Left ventricle myocardium inferior (tissue), 1 donor: ENCODE measurements at regions of chr10 and their contacts with region 1.

Region 1: GRCh38 chr10:11515596-11516430 is 95.6 kb downstream of the USP6NL start:
- DNase-seq: no peak
- H3K4me3 ChIP-seq: no peak overlapping the region
- H3K27ac ChIP-seq: no peak overlapping the region
- H3K4me1 ChIP-seq: peaks cover 7% of the 10 kb centered on the region
- H3K27me3 ChIP-seq: no peaks in the 10 kb centered on the region
- CTCF ChIP-seq: peak; percentile 90

Region 2: DNA sequence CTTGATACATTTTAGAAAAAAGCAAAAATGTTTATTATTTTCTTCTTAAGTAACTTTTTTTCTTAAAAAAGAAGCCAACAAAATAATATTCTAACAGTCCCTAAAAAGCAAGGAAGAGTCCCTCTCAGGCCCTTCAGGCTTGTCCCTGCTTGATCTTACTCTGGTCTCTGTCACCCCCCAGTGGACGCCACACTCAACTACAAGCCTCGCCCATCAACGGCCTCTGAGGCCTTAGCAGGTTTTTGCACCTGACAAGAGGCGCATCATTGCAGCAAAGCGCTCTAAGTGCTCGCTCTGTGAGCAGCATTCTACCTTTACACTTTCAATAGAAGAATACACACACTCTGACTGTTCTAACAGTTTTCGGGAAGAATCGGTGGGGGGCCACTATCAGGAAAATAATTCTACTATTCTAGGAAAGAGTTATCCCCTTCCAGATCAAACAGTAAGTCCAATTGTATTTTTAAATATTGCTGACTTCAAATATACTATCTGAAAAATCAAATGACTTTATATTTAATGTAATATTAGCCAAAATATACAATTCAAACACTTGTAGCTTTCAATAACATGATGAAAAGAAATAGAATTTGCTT is 43.6 kb before region 1 on chr10:
- intact Hi-C with region 1: no loop called
- DNase-seq: peak; percentile 48
- H3K4me3 ChIP-seq: no peak overlapping the region
- H3K27ac ChIP-seq: no peak overlapping the region
- H3K4me1 ChIP-seq: peaks cover 8% of the 10 kb centered on the region
- H3K27me3 ChIP-seq: no peaks in the 10 kb centered on the region
- CTCF ChIP-seq: peak; percentile 91

Region 3: GRCh38 chr10:11578802-11579255 is 63.0 kb after region 1 on chr10:
- intact Hi-C with region 1: no loop called
- DNase-seq: no peak
- H3K4me3 ChIP-seq: no peak overlapping the region
- H3K27ac ChIP-seq: no peak overlapping the region
- H3K4me1 ChIP-seq: peaks cover 8% of the 10 kb centered on the region
- H3K27me3 ChIP-seq: no peaks in the 10 kb centered on the region
- CTCF ChIP-seq: no peak

Region 4: DNA sequence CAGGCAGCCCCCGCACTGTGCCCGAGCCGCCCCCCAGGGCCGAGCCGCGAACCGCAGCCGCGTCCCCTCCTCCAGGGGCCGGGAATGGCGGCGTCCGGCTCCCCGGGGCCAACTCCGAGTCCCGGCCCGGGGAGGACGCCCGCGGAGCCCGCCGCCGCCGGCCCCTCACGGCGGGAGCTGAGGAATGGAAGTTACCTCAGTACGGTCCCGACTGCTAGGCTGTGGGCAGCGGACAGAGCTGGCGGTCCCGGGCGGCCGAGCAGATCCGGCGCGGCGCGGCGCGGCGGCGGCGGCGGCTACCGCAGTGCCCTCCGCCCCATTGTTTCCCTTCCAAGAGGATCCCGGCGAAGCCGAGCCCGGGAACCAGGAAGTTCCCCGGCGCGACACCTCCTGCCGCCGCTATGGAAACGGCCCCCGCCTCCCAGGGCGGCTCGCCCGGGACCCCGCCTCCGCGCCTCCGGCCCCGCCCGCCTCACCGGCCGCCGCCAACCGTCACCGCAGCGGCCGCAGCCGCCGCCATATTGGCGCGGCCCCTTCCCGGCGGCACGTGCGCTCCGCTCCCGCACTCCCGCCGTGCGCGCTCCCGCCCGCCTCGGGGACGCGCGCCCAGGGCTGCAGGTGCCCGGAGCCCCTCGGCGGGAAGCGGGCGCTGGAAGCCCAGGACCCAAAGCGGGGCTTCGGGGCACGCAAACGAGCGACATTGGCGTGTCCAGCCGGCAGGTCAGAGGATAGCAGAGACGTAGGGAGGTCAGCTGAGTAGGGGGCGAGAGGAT is 95.6 kb after region 1 on chr10 and contains the start of gene USP6NL:
- intact Hi-C with region 1: no loop called
- DNase-seq: peak; percentile 91
- H3K4me3 ChIP-seq: peak within 1 kb of the TSS; percentile 83
- H3K27ac ChIP-seq: peak within 1 kb of the TSS; percentile 91
- H3K4me1 ChIP-seq: peaks cover 34% of the 10 kb centered on the region
- H3K27me3 ChIP-seq: no peaks in the 10 kb centered on the region
- CTCF ChIP-seq: no peak
- total RNA-seq, gene USP6NL: 7.9 TPM

Region 5: GRCh38 chr10:11724938-11725776 is 209.3 kb after region 1 on chr10:
- intact Hi-C with region 1: loop called (anchors 10 kb)
- DNase-seq: no peak
- H3K4me3 ChIP-seq: no peak overlapping the region
- H3K27ac ChIP-seq: no peak overlapping the region
- H3K4me1 ChIP-seq: no peaks in the 10 kb centered on the region
- H3K27me3 ChIP-seq: peaks cover 3% of the 10 kb centered on the region
- CTCF ChIP-seq: peak; percentile 82

Region 6: GRCh38 chr10:11757821-11758463 is 242.1 kb after region 1 on chr10:
- intact Hi-C with region 1: loop called (anchors 10 kb)
- DNase-seq: peak; percentile 85
- H3K4me3 ChIP-seq: no peak overlapping the region
- H3K27ac ChIP-seq: peak overlapping the region; percentile 78
- H3K4me1 ChIP-seq: peaks cover 65% of the 10 kb centered on the region
- H3K27me3 ChIP-seq: no peaks in the 10 kb centered on the region
- CTCF ChIP-seq: peak; percentile 97